PC-9 (cell line): ENCODE measurements at regions of chr11 and their contacts with region 1.

Region 1: GRCh38 chr11:33296695-33297094 is 39.5 kb downstream of the HIPK3 start:
- DNase-seq: no peak
- H3K4me3 ChIP-seq: no peak overlapping the region
- H3K27ac ChIP-seq: no peak overlapping the region
- H3K4me1 ChIP-seq: no peaks in the 10 kb centered on the region
- H3K27me3 ChIP-seq: no peaks in the 10 kb centered on the region
- CTCF ChIP-seq: no peak

Region 2: DNA sequence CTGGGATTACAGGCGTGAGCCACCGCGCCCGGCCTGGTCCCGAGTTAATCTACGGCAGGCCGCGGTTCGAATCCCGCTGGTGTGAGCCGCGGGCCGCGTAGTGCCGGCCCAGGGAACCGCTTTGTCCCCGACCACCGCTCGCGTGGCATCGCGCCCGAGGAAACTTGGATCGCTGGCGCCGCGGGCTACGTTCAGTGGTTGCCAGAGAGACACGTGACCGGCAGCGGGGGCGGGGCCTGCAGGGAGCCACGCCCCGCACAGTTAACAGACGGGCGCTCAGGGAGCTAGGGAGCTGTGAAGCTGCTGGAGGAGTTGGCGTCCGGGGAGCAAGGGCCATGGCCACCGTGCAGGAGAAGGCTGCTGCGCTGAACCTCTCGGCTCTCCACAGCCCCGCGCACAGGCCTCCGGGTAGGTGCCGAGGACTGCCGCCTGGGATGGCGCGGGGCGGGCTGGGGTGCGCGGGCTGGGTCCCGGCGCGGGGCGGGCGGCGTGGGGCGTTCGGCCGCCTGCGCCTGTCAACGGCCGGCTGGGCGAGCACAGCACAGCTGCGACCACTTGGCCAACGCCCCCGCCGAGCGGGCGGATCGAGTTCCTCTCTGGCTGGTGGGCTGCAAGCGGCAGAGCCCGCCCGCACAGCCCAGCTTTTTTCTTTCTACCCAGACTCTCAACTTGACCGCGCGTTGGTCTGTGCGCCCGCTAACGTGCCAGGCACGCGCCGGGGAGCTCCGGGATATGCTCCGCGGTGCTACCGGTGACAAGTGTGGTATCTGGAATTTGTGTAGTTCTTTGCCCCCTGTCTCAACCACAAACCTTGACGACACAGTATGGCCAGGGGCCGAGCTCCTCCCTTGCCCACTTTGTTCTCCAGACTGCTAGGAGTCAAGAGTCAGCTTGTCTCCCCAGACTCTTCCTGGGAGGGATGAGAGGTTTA is 280.8 kb before region 1 on chr11 and contains the start of gene DEPDC7:
- CTCF ChIA-PET with region 1: no interaction called
- POLR2A ChIA-PET with region 1: no interaction called
- intact Hi-C with region 1: no loop called
- DNase-seq: peak; percentile 55 to 88
- H3K4me3 ChIP-seq: peak within 1 kb of the TSS; percentile 57
- H3K27ac ChIP-seq: no peak within 1 kb of the TSS
- H3K4me1 ChIP-seq: peaks cover 11% of the 10 kb centered on the region
- H3K27me3 ChIP-seq: peaks cover 4% of the 10 kb centered on the region; the same call in 1 of the 2 replicates
- CTCF ChIP-seq: no peak
- total RNA-seq, gene DEPDC7: 0.68 and 1.2 TPM in 2 replicates

Region 3: GRCh38 chr11:33248416-33248971 is 48.2 kb before region 1 on chr11:
- CTCF ChIA-PET with region 1: no interaction called
- POLR2A ChIA-PET with region 1: interaction called, 10 read pairs
- intact Hi-C with region 1: no loop called
- DNase-seq: no peak
- H3K4me3 ChIP-seq: no peak overlapping the region
- H3K27ac ChIP-seq: no peak overlapping the region
- H3K4me1 ChIP-seq: peaks cover 4% of the 10 kb centered on the region; the same call in 1 of the 2 replicates
- H3K27me3 ChIP-seq: no peaks in the 10 kb centered on the region
- CTCF ChIP-seq: no peak